Ovary (tissue), 10 donors: ENCODE measurements at regions of chr12 and their contacts with region 1.

Region 1: GRCh38 chr12:12611512-12612306 is at the start of gene CREBL2:
- DNase-seq: peak; percentile 95 to 98 (median 96)
- H3K4me3 ChIP-seq: peak within 1 kb of the TSS; percentile 59
- H3K27ac ChIP-seq: peak within 1 kb of the TSS; percentile 56 to 92
- H3K4me1 ChIP-seq: peaks cover 6% of the 10 kb centered on the region
- H3K27me3 ChIP-seq: no peaks in the 10 kb centered on the region
- CTCF ChIP-seq: no peak
- EP300 ChIP-seq: peak; percentile 83
- POLR2A ChIP-seq: peak; percentile 63
- total RNA-seq, gene CREBL2: 23.7 to 46.6 (median 38.2) TPM

Region 2: GRCh38 chr12:12696562-12697383 is 85.1 kb after region 1 on chr12:
- intact Hi-C with region 1: loop called in 1 of 4 experiments (anchors 5 kb)
- DNase-seq: peak; percentile 89 to 94 (median 92)
- H3K4me3 ChIP-seq: peak overlapping the region; percentile 59
- H3K27ac ChIP-seq: peak overlapping the region; percentile 92 to 93
- H3K4me1 ChIP-seq: no peaks in the 10 kb centered on the region
- H3K27me3 ChIP-seq: no peaks in the 10 kb centered on the region
- CTCF ChIP-seq: no peak
- EP300 ChIP-seq: peak; percentile 18
- POLR2A ChIP-seq: peak; percentile 57